ENCODE measurements at regions of chr3 and their contacts with region 1.

Region 1: DNA sequence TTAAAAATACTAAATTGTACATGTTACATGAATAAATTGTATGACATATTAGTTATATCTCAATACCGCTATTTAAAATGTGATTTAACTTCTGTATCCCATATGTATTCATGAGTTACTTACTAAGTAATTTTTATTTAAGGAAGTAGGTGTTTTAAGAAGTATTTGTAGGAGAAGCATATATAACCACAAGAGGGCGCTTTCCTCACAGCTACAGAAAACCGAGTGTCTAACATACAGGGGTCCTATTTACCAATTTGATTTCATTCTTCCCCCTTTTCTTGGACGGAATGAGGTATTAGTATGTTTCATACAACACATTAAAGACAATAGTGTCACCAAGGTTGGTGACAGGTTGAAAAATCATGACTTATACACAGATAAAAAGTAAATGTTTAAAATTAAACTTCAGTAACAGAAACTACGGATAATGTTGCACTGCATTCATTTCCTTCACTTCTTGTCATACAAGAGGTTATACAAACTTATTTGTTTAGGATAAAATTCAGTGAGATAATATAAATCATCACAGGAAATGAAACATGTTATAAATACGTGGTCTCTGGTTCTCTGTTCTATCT is 253.6 kb downstream of the MAGI1 start:
- DNase-seq: no peak
- ATAC-seq: no peak

Region 2: DNA sequence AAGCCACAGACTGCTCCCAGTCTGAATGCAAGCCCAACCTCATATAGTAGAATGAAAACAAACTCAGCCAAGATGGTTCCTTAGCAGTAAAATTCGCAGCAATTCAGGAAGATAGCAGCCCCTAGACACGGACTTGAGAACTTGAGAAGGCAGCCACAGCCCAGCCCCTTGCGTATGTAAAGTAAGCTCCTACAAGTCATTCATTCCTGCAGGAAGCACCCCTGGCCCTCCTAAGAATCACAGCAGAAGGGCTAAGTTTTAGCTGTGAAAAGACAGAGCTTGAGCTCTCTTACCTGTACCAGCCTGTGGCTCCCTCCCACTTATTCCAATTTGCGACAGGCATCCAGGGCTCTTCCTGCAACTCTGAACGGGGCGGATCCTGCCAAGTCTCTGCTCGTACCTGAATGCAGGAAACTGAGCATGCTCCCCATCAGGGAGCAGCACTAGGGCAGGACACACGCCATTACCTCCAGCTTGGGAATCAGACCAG is 117.2 kb after region 1 on chr3:
- intact Hi-C with region 1: loop called (anchors 10 kb)
- DNase-seq: no peak
- ATAC-seq: no peak

Region 3: DNA sequence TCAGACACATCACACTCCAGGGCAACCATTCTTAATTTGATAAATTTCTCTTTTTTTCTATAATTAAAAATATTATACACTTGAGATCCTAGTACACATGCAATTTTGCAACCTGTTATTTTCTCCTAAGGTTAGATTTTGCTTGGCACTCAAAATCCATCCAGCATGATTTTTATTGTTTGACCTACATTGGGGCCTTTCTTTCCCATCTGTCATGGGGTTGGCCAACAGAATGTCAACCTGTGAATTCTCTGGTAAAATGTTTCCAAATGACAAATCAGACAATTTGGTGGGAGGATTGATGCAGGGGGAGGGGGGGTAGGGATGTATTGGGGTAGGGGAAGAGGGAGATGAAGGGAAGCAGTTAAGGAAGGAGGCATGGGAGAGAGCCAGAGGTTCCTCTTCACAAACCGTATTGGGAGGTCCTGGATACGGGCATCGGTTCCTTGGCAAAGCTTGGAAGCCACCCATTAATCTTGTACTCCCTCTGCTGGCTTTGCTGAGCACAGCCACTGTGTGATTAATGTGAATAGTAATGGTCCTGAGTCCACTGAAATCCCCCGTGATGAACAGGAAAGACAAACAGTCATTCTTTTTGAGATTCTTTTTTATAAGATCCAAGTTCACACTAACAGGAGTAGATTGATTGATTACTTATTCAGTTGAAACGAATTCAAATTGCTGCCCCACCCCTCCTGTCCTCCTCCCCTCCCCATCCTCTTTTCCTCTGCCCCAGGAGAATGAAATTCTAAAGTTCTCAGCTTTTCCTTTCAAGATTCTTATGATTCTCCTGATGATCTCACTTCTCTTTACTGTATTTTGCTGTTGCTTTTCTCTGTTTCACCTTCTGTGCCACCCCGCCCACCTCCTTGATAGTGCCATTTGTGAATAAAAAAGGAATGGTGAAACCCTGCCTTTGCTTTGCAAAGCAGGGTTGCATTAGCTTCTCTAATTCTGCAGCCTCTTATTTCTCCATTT is 353.5 kb after region 1 on chr3:
- intact Hi-C with region 1: loop called (anchors 2 kb)
- DNase-seq: no peak
- ATAC-seq: peak; percentile 80

Region 4: GRCh38 chr3:66195347-66195783 is 410.2 kb after region 1 on chr3:
- intact Hi-C with region 1: loop called (anchors 5 kb)
- DNase-seq: peak; percentile 81
- ATAC-seq: peak; percentile 67